Posterior vena cava (tissue), 2 donors: ENCODE measurements at regions of chr5 and their contacts with region 1.

Region 1: DNA sequence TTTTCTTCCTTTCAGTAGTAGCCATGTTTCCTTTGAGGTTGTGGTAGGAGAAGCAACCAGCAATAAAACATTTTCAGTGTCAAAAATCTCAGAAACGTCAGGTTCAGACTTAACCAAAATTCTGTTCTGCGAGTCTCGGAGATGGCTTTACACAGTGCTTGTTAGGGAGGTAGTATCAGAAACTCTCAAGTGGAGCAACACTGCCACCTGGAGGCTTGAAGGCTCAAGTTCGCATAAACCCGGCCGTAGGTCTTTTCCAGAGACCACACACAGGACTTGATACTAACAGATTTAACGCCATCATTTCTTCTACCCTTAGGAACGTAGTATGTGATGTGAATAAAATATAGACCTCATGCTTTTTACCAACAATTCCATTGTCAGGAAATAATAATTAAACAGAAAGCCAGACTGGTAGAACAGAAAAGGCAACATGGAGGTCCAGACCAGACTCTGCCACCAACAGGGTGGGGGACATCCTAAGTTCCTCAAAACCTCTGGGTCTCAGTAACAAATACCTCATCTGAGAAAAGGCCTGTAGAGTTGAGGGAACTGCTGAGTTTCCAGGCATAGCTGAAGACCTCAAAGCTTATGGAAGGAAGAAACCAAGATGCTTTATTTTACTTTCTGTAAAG is 8.5 kb downstream of the PTGER4 start:
- DNase-seq: peak; percentile 91

Region 2: DNA sequence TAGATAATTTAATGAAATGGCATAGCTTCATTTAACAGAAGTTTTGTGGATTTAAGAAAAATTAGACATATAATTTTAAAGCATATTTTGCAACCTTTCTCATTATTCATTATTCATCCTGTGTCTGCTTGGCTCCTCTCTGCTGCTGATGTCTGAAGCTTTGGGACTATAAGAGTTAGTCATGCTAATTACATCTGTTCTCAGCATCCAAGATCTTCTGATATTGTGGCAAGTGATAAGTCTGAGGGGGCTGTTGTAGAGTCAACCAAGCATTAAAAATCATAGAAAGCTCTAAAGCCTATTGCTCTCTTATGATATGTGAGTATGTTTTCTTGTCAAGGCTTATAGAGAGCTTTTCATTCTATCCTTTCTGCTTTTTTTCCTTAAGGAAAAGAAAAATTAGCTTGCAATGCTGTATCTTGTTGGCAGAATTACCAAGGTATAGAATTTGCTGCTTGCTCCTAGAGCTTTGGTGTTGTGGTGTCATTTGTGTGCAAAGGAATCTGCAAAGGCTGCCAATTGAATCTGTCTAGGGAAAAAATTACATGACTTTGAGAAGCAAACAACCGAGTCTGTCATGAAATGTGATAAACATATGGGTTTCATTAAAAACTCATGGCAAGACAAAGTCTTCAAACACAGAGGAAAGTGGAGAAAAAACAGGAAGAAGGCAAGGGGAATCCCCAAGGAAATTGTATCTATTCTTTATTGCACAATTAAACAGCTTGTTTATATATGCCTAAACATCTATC is 1107.4 kb before region 1 on chr5:
- intact Hi-C with region 1: loop called in 1 of 2 experiments (anchors 10 kb)
- DNase-seq: no peak